ENCODE measurements at regions of chr2 and their contacts with region 1.

Region 1: GRCh38 chr2:173965329-173966025 is at the start of gene SP3:
- DNase-seq: peak; percentile 95 to 97 (median 96)
- H3K4me3 ChIP-seq: peak within 1 kb of the TSS; percentile 53 to 83
- H3K4me3 Mint-ChIP-seq: peak within 1 kb of the TSS; percentile 90 to 99 (median 96)
- H3K27ac ChIP-seq: peak within 1 kb of the TSS; percentile 96
- H3K27ac Mint-ChIP-seq: peak within 1 kb of the TSS; percentile 94 to 100 (median 98)
- H3K4me1 ChIP-seq: peaks cover 33% of the 10 kb centered on the region
- H3K4me1 Mint-ChIP-seq: peaks cover 23 to 51% (median 35%) of the 10 kb centered on the region in 4 donors
- H3K27me3 ChIP-seq: no peaks in the 10 kb centered on the region
- H3K27me3 Mint-ChIP-seq: no peaks in the 10 kb centered on the region
- total RNA-seq, gene SP3: 117 to 130 TPM

Region 2: GRCh38 chr2:173922760-173923159 is 42.7 kb before region 1 on chr2:
- CTCF ChIA-PET with region 1: no interaction called
- POLR2A ChIA-PET with region 1: interaction called, 3 read pairs
- intact Hi-C with region 1: loop called (anchors 5 kb)
- DNase-seq: no peak
- H3K4me3 ChIP-seq: no peak overlapping the region
- H3K4me3 Mint-ChIP-seq: peak overlapping the region in 1 of 8 donors; percentile 32
- H3K27ac ChIP-seq: no peak overlapping the region
- H3K27ac Mint-ChIP-seq: peak overlapping the region in 4 of 7 donors; percentile 9 to 84 (median 52)
- H3K4me1 ChIP-seq: peaks cover 74% of the 10 kb centered on the region
- H3K4me1 Mint-ChIP-seq: peaks cover 56 to 86% (median 69%) of the 10 kb centered on the region in 4 donors
- H3K27me3 ChIP-seq: no peaks in the 10 kb centered on the region
- H3K27me3 Mint-ChIP-seq: no peaks in the 10 kb centered on the region

Region 3: DNA sequence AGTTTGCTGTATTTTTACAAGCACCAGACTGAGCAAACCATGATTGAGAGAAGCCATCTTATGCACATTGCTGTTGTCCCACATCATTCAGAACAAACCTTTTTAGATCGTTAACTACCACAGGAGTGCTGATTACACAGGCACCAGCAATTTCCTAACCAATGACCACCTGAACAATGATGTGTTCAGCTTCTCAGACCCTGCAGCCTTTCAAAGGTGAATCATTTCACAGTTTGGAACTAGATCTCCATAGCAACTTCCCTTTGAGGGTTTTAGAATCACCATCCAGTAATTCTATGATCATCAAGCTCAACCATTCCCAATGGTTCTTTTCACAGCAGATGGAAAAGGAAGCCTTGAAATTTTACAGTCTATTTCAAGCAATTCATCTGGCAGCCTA is 211.4 kb after region 1 on chr2:
- CTCF ChIA-PET with region 1: no interaction called
- POLR2A ChIA-PET with region 1: no interaction called
- intact Hi-C with region 1: no loop called
- DNase-seq: no peak
- H3K4me3 ChIP-seq: no peak overlapping the region
- H3K4me3 Mint-ChIP-seq: no peak overlapping the region
- H3K27ac ChIP-seq: no peak overlapping the region
- H3K27ac Mint-ChIP-seq: no peak overlapping the region
- H3K4me1 ChIP-seq: no peaks in the 10 kb centered on the region
- H3K4me1 Mint-ChIP-seq: peaks cover 6 to 17% (median 13%) of the 10 kb centered on the region in 4 donors
- H3K27me3 ChIP-seq: no peaks in the 10 kb centered on the region
- H3K27me3 Mint-ChIP-seq: no peaks in the 10 kb centered on the region

Region 4: DNA sequence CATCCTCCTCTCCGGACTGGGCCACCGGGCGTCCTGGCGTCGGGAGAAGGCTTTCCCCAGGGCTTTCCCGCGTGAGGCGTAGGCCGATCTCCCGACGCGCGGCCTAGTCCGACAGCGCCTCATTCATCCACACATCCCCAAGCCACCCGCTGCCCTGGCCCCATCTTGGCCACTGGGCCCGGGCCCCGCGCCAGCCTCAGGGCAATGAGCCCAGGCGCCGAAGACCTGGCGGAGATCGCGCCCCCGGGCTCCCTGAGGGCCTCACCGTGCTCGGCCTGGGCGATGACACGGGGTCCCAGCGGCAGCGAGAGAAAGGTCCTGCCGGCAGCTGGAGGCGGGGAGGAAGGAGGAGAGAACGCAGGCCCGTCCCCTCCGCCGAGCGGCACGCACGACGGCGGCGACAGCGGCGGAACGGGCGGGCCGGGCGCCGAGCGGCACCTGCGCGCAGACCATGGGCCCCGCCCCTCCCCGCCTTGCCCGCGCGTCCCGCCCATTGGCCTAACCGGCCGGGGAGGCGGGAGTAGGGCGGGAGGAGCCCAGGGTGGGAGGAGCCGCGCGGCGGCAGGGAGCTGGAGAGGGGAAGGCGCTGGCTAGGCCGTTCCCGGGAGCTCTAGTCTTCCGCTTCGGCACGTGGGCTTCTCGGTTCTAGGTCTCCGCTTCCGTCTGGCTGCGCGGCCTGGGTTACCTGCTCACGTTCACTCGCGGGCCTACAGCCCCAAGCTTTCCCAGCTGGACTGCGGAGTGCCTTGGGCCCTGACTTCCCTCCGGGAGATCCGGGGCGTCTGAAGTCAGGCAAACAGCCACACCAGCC is 282.9 kb after region 1 on chr2 and contains the start of gene OLA1:
- CTCF ChIA-PET with region 1: no interaction called
- POLR2A ChIA-PET with region 1: interaction called, 4 read pairs
- intact Hi-C with region 1: loop called (anchors 2 kb)
- DNase-seq: peak; percentile 93 to 99 (median 95)
- H3K4me3 ChIP-seq: peak within 1 kb of the TSS; percentile 84 to 87
- H3K4me3 Mint-ChIP-seq: peak within 1 kb of the TSS; percentile 79 to 88 (median 85)
- H3K27ac ChIP-seq: peak within 1 kb of the TSS; percentile 78
- H3K27ac Mint-ChIP-seq: peak within 1 kb of the TSS; percentile 63 to 87 (median 80)
- H3K4me1 ChIP-seq: peaks cover 14% of the 10 kb centered on the region
- H3K4me1 Mint-ChIP-seq: peaks cover 11 to 32% (median 19%) of the 10 kb centered on the region in 4 donors
- H3K27me3 ChIP-seq: no peaks in the 10 kb centered on the region
- H3K27me3 Mint-ChIP-seq: no peaks in the 10 kb centered on the region
- total RNA-seq, gene OLA1: 31.1 to 31.2 TPM

Measured in CD4-positive, alpha-beta memory T cell (primary cell).